ENCODE measurements at regions of chr1 and their contacts with region 1.

Region 1: GRCh38 chr1:92065044-92065443 is 10.2 kb downstream of the SETSIP start:
- DNase-seq: no peak
- H3K4me3 ChIP-seq: no peak overlapping the region
- H3K27ac ChIP-seq: no peak overlapping the region
- H3K4me1 ChIP-seq: no peaks in the 10 kb centered on the region
- H3K27me3 ChIP-seq: no peaks in the 10 kb centered on the region
- CTCF ChIP-seq: no peak

Region 2: DNA sequence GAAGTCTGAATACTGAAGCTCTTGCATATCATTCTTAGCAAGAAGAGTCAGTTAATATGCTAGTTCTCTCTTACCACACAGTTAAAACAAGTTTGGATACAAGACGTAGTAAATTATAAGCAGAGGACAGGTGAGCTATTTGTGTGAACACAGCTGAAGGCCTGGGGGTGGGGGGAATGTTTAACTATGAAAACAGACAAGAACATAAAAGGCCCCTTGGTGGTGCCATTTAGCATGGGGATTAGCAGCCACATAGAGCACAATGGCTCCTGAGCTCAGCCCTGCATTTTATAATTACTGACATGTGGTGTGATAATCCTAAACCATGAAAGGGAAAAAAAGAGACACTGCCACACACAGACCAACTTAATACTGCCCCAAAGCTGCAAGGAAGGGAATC is 273.9 kb before region 1 on chr1:
- CTCF ChIA-PET with region 1: no interaction called
- POLR2A ChIA-PET with region 1: no interaction called
- intact Hi-C with region 1: no loop called
- DNase-seq: peak in 1 of 2 experiments; percentile 21
- H3K4me3 ChIP-seq: no peak overlapping the region
- H3K27ac ChIP-seq: no peak overlapping the region
- H3K4me1 ChIP-seq: peaks cover 23% of the 10 kb centered on the region
- H3K27me3 ChIP-seq: no peaks in the 10 kb centered on the region
- CTCF ChIP-seq: no peak

Region 3: DNA sequence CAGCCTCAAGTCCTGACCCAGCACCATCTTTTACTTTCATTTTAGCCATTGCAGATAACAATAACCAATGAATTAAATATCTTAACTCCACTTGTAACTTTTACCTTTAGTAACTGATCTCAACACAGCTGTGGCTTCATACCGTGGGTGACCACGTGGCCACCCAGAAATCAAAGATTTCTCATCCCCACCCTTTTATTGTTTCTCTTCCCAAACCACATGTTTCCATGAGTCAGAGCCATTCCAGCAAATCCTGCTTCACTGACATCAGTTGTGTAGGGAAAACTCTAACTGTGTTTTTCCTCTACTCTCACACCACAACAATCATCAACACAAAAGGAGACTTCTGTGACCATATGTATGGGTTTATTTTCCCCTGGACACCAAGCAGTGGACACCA is 140.9 kb before region 1 on chr1:
- CTCF ChIA-PET with region 1: no interaction called
- POLR2A ChIA-PET with region 1: no interaction called
- intact Hi-C with region 1: no loop called
- DNase-seq: no peak
- H3K4me3 ChIP-seq: no peak overlapping the region
- H3K27ac ChIP-seq: no peak overlapping the region
- H3K4me1 ChIP-seq: peaks cover 13% of the 10 kb centered on the region
- H3K27me3 ChIP-seq: no peaks in the 10 kb centered on the region
- CTCF ChIP-seq: no peak

Region 4: DNA sequence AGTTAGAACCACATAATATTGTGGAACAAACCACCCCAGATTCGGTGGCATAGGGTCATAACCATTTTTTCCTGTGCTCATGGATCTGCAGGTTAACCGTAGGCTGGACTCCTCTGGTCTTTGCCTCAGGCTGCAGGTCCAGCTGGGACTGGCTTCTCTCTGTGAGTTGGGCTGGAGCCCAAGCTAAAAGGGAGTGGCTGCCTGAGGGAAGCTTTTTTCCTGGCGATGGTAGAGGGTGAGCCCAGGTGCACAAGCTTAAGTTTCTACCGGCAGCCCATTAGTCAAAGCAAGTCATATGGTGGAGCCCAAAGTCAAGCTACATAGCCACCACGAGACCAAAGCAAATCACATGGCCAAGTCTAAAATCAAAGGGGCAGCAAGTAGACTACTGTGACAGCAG is 21.4 kb before region 1 on chr1:
- CTCF ChIA-PET with region 1: no interaction called
- POLR2A ChIA-PET with region 1: no interaction called
- intact Hi-C with region 1: no loop called
- DNase-seq: peak in 1 of 2 experiments; percentile 3
- H3K4me3 ChIP-seq: no peak overlapping the region
- H3K27ac ChIP-seq: no peak overlapping the region
- H3K4me1 ChIP-seq: no peaks in the 10 kb centered on the region
- H3K27me3 ChIP-seq: no peaks in the 10 kb centered on the region
- CTCF ChIP-seq: no peak

Region 5: GRCh38 chr1:92154934-92155333 is 89.9 kb after region 1 on chr1:
- CTCF ChIA-PET with region 1: no interaction called
- POLR2A ChIA-PET with region 1: interaction called, 18 read pairs
- intact Hi-C with region 1: no loop called
- DNase-seq: no peak
- H3K4me3 ChIP-seq: no peak overlapping the region
- H3K27ac ChIP-seq: no peak overlapping the region
- H3K4me1 ChIP-seq: no peaks in the 10 kb centered on the region
- H3K27me3 ChIP-seq: no peaks in the 10 kb centered on the region
- CTCF ChIP-seq: no peak

Region 6: DNA sequence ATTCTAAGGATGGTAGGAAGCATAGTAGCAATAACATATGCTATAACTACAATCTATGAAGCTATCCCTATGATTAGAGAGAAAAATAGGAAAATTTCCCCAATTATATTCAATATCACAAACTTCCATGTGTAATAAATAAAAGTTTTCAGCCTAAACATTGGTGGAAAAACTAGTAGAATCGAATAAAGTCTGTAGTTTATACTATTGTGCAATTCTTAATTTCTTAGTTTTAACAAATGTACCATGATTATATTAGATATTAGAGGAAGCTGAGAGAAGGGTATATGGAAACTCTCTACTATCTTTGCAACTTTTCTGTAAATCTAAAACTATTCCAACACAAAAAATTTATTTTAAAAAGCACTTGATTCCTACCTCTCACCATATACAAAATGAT is 435.5 kb after region 1 on chr1:
- CTCF ChIA-PET with region 1: no interaction called
- POLR2A ChIA-PET with region 1: interaction called, 11 read pairs
- intact Hi-C with region 1: no loop called
- DNase-seq: no peak
- H3K4me3 ChIP-seq: no peak overlapping the region
- H3K27ac ChIP-seq: no peak overlapping the region
- H3K4me1 ChIP-seq: 0 out of 2 replicates have a peak, but pooled peaks cover 5% of the 10 kb centered on the region
- H3K27me3 ChIP-seq: no peaks in the 10 kb centered on the region
- CTCF ChIP-seq: no peak